Endothelial cell of umbilical vein (primary cell): ENCODE measurements at regions of chr5 and their contacts with region 1.

Region 1: DNA sequence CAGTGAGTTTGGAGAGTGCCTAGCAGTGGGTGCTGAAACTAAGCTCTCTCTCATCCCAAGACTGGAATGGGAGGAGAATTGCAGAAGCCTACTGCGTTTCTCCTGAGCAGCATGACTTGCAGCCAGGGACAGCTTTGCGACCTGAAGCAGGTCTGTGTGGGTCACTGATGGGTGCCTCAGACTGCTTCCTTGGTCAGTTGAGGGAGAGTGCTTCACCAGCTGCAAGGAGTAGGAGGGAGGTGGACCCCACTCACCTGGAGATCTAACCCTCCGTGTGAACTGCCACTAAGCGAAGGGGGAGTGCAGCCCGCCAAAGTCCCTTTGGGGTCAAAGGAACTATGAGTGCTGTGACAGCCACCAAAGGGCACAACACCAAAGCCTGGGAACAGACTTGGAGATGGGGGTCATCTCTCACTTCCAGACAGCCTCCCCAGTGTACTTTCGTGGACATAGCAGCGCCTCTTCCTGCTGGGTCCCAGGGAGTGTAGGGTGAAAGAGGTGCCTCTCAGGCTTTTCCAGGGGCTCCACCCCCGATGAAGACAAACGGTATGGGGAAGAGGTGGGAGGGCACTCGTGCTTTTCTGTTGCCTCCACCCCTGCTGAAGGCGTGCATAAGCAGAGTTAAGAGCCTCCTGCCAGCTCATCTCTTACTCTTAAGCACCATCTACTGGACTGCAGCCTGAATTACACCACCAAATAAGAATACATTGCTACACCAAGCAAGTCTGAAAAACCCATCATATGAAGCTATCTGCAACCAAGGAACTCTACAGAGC is 34.3 kb upstream of the MACIR start:
- DNase-seq: peak; percentile 78
- H3K4me3 ChIP-seq: no peak overlapping the region
- H3K27ac ChIP-seq: no peak overlapping the region
- H3K4me1 ChIP-seq: no peaks in the 10 kb centered on the region
- H3K27me3 ChIP-seq: no peaks in the 10 kb centered on the region
- CTCF ChIP-seq: peak; percentile 69 to 71
- POLR2A ChIP-seq: no peak

Region 2: DNA sequence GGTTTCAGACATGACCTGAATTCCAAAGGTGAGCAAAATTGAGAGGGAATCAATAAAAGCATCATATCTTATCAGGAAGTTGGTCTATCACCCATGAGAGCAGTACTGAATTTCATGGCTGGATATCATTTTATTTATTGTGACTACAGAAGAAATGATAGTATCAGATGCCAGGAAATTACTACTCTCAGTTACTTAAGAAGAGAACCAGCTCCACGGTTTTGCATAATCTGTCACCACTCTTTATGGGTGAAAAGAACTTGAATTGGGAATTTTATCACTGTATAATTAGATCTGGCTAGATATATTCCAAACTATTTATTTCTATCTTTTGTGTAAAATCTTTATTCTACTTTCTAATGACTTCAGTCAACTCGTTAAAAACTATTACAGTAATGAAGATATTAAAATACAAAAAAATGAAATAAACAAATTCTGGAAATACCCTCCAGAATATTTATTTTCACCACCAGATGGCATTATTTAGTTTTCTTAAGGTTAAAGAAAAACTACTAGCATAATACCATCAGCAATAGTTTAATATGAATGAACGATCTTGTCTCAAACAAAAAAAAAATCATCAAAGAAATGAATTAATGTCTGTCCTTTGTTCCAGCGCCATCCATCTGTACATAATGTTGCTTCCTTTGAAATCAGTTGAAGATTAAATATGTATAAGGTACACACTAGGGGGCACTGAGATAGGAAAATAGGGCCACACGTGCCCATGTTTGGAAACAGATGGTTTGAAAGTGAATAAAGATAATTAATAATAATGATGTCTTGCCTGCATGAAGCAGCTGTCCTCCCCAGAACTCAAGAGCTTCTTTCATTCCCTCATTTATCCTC is 640.8 kb before region 1 on chr5:
- CTCF ChIA-PET with region 1: interaction called, 9 read pairs
- POLR2A ChIA-PET with region 1: no interaction called
- dilution Hi-C with region 1: no loop called
- intact Hi-C with region 1: loop called (anchors 2 kb)
- DNase-seq: peak; percentile 43
- H3K4me3 ChIP-seq: no peak overlapping the region
- H3K27ac ChIP-seq: no peak overlapping the region
- H3K4me1 ChIP-seq: no peaks in the 10 kb centered on the region
- H3K27me3 ChIP-seq: peaks cover 7 to 8% of the 10 kb centered on the region in 2 experiments
- CTCF ChIP-seq: no peak
- POLR2A ChIP-seq: no peak

Region 3: DNA sequence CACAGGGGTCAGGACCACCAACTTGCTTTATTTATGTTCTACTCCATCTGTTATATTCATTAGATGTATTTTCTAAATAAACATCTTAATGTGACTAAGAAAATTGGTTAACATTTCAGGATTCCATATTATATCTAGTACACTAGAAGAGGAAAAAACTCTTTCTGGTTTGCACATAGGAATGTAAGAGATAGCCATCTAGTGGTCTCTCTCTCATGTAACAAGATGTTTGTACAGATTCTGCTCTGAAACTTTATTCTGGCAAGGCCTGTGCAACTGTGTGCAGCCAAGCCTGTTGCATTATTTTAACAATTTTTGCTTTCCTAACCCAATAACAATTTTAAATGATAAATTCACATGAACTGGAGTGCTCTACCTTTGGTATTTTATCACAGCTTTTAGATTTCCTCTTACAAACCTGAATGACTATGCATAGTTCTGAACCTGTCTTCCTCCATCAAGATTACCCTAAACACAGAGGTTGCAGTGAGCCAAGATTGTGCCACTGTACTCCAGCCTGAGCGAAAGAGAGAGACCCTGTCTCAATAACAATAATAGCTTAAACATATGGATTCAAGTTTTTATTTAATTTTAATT is 252.5 kb before region 1 on chr5:
- CTCF ChIA-PET with region 1: no interaction called
- POLR2A ChIA-PET with region 1: no interaction called
- dilution Hi-C with region 1: no loop called
- intact Hi-C with region 1: loop called (anchors 5 kb)
- DNase-seq: peak; percentile 40
- H3K4me3 ChIP-seq: no peak overlapping the region
- H3K27ac ChIP-seq: no peak overlapping the region
- H3K4me1 ChIP-seq: peaks cover 28% of the 10 kb centered on the region
- H3K27me3 ChIP-seq: no peaks in the 10 kb centered on the region
- CTCF ChIP-seq: peak; percentile 27 to 29
- POLR2A ChIP-seq: no peak

Region 4: DNA sequence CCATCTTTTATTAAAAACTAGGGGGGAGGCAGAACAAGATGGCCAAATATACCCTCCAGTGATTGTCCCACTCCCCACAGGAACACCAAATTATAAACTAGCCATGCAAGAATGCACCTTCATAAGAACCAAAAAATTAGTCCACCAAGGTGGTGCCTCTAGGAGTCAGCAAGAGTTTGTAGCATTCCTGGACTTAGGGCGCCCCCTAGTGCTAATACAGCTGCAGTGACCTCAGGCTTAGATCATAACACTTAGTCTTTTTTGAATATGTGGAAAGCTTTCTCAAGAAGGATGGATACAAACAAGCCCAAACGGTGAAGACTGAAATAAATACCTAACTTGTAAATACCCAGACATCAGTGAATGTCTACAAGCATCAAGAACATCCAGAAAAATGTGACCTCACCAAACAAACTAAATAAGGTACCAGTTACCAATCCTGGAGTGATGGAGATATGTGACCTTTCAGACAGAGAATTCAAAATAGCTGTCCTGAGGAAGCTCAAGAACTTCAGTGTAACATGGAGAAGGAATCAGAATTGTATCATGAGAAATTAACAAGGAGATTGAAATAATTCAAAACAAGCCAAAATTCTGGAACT is 84.9 kb before region 1 on chr5:
- CTCF ChIA-PET with region 1: interaction called, 29 read pairs
- POLR2A ChIA-PET with region 1: no interaction called
- dilution Hi-C with region 1: no loop called
- intact Hi-C with region 1: loop called (anchors 1 kb)
- DNase-seq: peak; percentile 69
- H3K4me3 ChIP-seq: no peak overlapping the region
- H3K27ac ChIP-seq: no peak overlapping the region
- H3K4me1 ChIP-seq: no peaks in the 10 kb centered on the region
- H3K27me3 ChIP-seq: no peaks in the 10 kb centered on the region
- CTCF ChIP-seq: peak; percentile 82 to 89
- POLR2A ChIP-seq: no peak

Region 5: GRCh38 chr5:103178167-103178566 is 46.1 kb before region 1 on chr5:
- CTCF ChIA-PET with region 1: interaction called, 10 read pairs
- POLR2A ChIA-PET with region 1: no interaction called
- dilution Hi-C with region 1: no loop called
- intact Hi-C with region 1: no loop called
- DNase-seq: no peak
- H3K4me3 ChIP-seq: no peak overlapping the region
- H3K27ac ChIP-seq: no peak overlapping the region
- H3K4me1 ChIP-seq: no peaks in the 10 kb centered on the region
- H3K27me3 ChIP-seq: no peaks in the 10 kb centered on the region
- CTCF ChIP-seq: no peak
- POLR2A ChIP-seq: no peak

Region 6: DNA sequence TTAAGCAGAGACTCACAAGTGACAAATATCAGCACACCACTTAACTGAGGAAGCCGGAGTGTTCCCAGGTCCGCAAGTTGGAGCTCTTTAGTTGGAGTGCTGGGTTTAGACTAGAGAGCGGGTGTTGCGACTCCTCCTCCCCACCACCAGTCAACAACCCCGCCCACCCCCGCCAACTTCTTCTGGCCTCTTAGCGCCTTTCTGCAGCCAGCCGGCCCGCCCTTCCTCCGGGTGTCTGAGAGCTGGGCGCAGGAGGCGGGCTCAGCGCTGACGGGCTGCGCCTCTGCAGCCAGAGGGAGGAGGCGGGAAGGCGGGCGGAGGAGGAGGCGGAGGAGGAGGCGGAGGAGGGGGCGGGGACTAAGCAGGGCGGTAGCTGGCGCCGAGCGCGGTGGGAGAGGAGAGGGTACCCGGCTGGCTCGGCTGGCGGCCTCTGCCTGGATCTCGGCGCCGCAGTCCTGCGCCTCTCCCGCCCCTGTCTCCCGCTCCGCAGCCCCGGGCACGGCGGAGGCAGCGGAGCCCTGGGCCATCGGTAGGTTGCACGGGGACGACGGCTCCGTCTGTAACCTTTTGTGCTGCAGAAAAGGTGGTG is 34.2 kb after region 1 on chr5 and contains the start of gene MACIR:
- CTCF ChIA-PET with region 1: interaction called, 11 read pairs
- POLR2A ChIA-PET with region 1: no interaction called
- dilution Hi-C with region 1: no loop called
- intact Hi-C with region 1: no loop called
- DNase-seq: peak; percentile 99
- H3K4me3 ChIP-seq: peak within 1 kb of the TSS; percentile 47 to 75 (median 69)
- H3K27ac ChIP-seq: peak within 1 kb of the TSS; percentile 76
- H3K4me1 ChIP-seq: peaks cover 8% of the 10 kb centered on the region
- H3K27me3 ChIP-seq: no peaks in the 10 kb centered on the region
- CTCF ChIP-seq: no peak
- POLR2A ChIP-seq: peak; percentile 69
- total RNA-seq, gene MACIR: 9.3 and 9.6 TPM in 2 replicates